ENCODE measurements at regions of chr4 and their contacts with region 1.

Region 1: DNA sequence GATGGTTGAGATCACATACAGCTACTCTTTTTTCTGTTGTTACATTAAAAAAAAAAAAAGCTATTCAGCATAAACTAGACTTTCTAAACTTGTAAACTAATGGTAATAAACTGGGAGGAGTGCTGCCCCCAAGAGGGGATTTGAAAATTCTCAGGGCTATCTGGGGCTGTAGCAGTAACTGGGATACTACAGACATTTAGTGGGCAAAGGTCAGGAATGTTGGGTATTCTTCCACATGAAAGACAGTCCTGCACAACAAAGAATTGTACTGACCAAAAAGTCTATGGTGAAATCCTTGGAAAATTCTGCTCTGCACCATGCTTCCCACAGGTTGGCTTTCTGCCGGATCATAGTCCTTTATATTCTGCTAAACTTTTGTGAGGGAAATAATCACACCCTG is 232.6 kb upstream of the BOD1L1 start:
- DNase-seq: no peak
- H3K4me3 ChIP-seq: no peak overlapping the region
- H3K27ac ChIP-seq: no peak overlapping the region
- H3K4me1 ChIP-seq: no peaks in the 10 kb centered on the region; a peak in 1 of 7 replicates
- H3K27me3 ChIP-seq: peaks cover 0 to 1% (median 0%) of the 10 kb centered on the region in 4 experiments; a peak in 1 of 7 replicates
- CTCF ChIP-seq: peak in 2 of 3 experiments; percentile 36 to 53; a peak in 3 of 4 replicates
- EP300 ChIP-seq: no peak
- POLR2A ChIP-seq: no peak
- RAD21 ChIP-seq: peak; percentile 29 to 54

Region 2: DNA sequence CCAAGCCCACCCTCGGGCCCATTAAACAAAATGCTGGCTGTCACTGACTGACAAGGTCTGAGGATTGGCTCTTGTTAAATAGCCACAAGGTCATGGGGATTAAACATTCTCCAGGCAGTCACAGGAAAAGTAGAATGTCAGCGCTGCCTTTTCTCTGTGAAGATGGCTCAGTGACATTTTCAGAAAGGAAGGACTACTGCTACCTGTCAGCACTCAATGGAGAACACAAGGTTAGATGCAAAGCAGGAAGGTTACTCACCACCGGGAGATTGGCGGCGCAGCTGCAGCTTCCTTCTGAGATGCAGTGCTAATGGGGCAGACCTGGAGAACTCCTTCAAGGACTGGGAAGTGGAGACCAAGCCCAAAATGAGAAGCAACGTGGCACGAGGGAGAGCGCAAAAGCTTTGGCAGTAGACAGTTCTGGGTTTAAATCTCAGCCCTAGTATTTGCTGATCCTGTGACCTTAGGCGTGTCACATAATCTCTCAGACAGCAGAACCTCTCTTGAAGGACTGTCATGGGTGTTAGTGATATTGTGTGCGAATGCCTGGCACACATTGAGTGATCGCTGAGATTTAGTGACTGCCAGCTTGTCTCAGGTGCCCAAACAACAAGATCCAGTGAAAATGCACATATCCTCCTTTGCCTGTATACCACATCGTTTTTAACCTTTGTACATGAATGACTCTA is 19.5 kb before region 1 on chr4:
- CTCF ChIA-PET with region 1: interaction called, 21 read pairs
- POLR2A ChIA-PET with region 1: no interaction called
- DNase-seq: no peak
- H3K4me3 ChIP-seq: no peak overlapping the region
- H3K27ac ChIP-seq: no peak overlapping the region
- H3K4me1 ChIP-seq: no peaks in the 10 kb centered on the region
- H3K27me3 ChIP-seq: no peaks in the 10 kb centered on the region
- CTCF ChIP-seq: no peak
- EP300 ChIP-seq: no peak
- POLR2A ChIP-seq: no peak
- RAD21 ChIP-seq: no peak

Measured in H1 (cell line).